Caco-2 (cell line): ENCODE measurements at regions of chr20 and their contacts with region 1.

Region 1: DNA sequence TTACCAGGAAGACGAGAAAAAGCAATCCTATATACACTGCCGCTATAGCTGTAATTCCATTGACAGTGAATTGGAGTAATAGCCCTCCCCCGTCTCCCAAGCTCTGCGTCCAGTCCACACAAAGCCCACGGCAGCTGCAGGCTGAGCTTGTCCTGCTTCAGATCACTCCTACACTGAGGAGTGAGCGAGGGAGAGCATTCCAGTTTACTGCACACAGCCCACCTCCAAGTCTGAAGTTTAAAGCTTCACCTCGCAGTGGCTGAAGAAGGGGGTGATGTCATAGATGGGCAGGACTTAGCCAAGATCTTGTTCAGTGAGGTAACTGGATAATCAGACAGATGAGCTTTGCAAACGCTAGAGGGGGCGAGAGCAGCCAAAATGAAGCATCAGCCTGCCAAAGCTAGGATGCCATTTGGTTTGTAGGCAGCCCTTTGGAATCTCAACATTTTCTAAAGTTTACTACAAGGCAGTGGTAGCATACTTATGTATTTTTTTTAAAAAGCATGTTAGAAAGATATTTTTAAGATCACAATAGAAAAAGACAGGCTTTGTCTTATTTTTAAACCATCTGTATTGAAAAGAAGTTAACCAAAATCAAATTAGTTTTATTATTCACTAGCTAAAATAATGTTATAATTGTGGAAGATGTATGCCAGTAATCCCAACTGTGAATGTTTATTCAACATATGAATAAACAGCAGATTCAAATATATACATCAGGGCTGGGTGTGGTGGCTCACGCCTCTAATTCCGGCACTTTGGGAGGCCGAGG is at the start of gene FLRT3:
- DNase-seq: peak; percentile 94 to 97
- H3K4me3 ChIP-seq: peak within 1 kb of the TSS; percentile 54
- H3K4me3 Mint-ChIP-seq: peak within 1 kb of the TSS; percentile 77
- H3K27ac Mint-ChIP-seq: peak within 1 kb of the TSS; percentile 48
- H3K4me1 ChIP-seq: peaks cover 40% of the 10 kb centered on the region
- H3K4me1 Mint-ChIP-seq: peaks cover 27% of the 10 kb centered on the region
- H3K27me3 ChIP-seq: no peaks in the 10 kb centered on the region
- H3K27me3 Mint-ChIP-seq: no peaks in the 10 kb centered on the region
- CTCF ChIP-seq: peak; percentile 81 to 82
- total RNA-seq, gene FLRT3: 98.2 and 107 TPM in 2 replicates

Region 2: GRCh38 chr20:14406495-14406894 is 68.9 kb after region 1 on chr20:
- CTCF ChIA-PET with region 1: interaction called, 16 read pairs
- POLR2A ChIA-PET with region 1: interaction called, 13 read pairs
- intact Hi-C with region 1: loop called (anchors 1 kb)
- DNase-seq: peak; percentile 79
- H3K4me3 ChIP-seq: no peak overlapping the region
- H3K4me3 Mint-ChIP-seq: no peak overlapping the region
- H3K27ac Mint-ChIP-seq: peak overlapping the region; percentile 92
- H3K4me1 ChIP-seq: peaks cover 39% of the 10 kb centered on the region
- H3K4me1 Mint-ChIP-seq: peaks cover 36% of the 10 kb centered on the region
- H3K27me3 ChIP-seq: no peaks in the 10 kb centered on the region
- H3K27me3 Mint-ChIP-seq: no peaks in the 10 kb centered on the region
- CTCF ChIP-seq: no peak

Region 3: GRCh38 chr20:14622796-14623195 is 285.2 kb after region 1 on chr20:
- CTCF ChIA-PET with region 1: interaction called, 8 read pairs
- POLR2A ChIA-PET with region 1: interaction called, 4 read pairs
- intact Hi-C with region 1: loop called (anchors 2 kb)
- DNase-seq: peak; percentile 39 to 42
- H3K4me3 ChIP-seq: no peak overlapping the region
- H3K4me3 Mint-ChIP-seq: no peak overlapping the region
- H3K27ac Mint-ChIP-seq: no peak overlapping the region
- H3K4me1 ChIP-seq: peaks cover 9% of the 10 kb centered on the region; the same call in 1 of the 2 replicates
- H3K4me1 Mint-ChIP-seq: no peaks in the 10 kb centered on the region
- H3K27me3 ChIP-seq: no peaks in the 10 kb centered on the region
- H3K27me3 Mint-ChIP-seq: no peaks in the 10 kb centered on the region
- CTCF ChIP-seq: peak; percentile 14 to 42

Region 4: GRCh38 chr20:14761903-14762302 is 424.3 kb after region 1 on chr20:
- CTCF ChIA-PET with region 1: interaction called, 3 read pairs
- POLR2A ChIA-PET with region 1: no interaction called
- intact Hi-C with region 1: loop called (anchors 1 kb)
- DNase-seq: peak; percentile 22 to 37
- H3K4me3 ChIP-seq: no peak overlapping the region
- H3K4me3 Mint-ChIP-seq: no peak overlapping the region
- H3K27ac Mint-ChIP-seq: no peak overlapping the region
- H3K4me1 ChIP-seq: no peaks in the 10 kb centered on the region
- H3K4me1 Mint-ChIP-seq: no peaks in the 10 kb centered on the region
- H3K27me3 ChIP-seq: no peaks in the 10 kb centered on the region
- H3K27me3 Mint-ChIP-seq: no peaks in the 10 kb centered on the region
- CTCF ChIP-seq: peak in 1 of 2 experiments; percentile 12

Region 5: GRCh38 chr20:14986026-14986655 is 648.6 kb after region 1 on chr20:
- CTCF ChIA-PET with region 1: interaction called, 3 read pairs
- POLR2A ChIA-PET with region 1: interaction called, 5 read pairs
- intact Hi-C with region 1: loop called (anchors 2 kb)
- DNase-seq: peak; percentile 88 to 93
- H3K4me3 ChIP-seq: no peak overlapping the region
- H3K4me3 Mint-ChIP-seq: peak overlapping the region; percentile 47
- H3K27ac Mint-ChIP-seq: peak overlapping the region; percentile 94
- H3K4me1 ChIP-seq: peaks cover 40% of the 10 kb centered on the region
- H3K4me1 Mint-ChIP-seq: peaks cover 25% of the 10 kb centered on the region
- H3K27me3 ChIP-seq: no peaks in the 10 kb centered on the region
- H3K27me3 Mint-ChIP-seq: no peaks in the 10 kb centered on the region
- CTCF ChIP-seq: no peak

Region 6: GRCh38 chr20:15498926-15499325 is 1161.3 kb after region 1 on chr20:
- CTCF ChIA-PET with region 1: no interaction called
- POLR2A ChIA-PET with region 1: no interaction called
- intact Hi-C with region 1: loop called (anchors 2 kb)
- DNase-seq: peak; percentile 76 to 81
- H3K4me3 ChIP-seq: no peak overlapping the region
- H3K4me3 Mint-ChIP-seq: peak overlapping the region; percentile 51
- H3K27ac Mint-ChIP-seq: peak overlapping the region; percentile 58
- H3K4me1 ChIP-seq: peaks cover 59% of the 10 kb centered on the region
- H3K4me1 Mint-ChIP-seq: peaks cover 55% of the 10 kb centered on the region
- H3K27me3 ChIP-seq: no peaks in the 10 kb centered on the region
- H3K27me3 Mint-ChIP-seq: no peaks in the 10 kb centered on the region
- CTCF ChIP-seq: no peak